B cell (primary cell): ENCODE measurements at regions of chr3 and their contacts with region 1.

Region 1: GRCh38 chr3:15405448-15406050 is 21.8 kb downstream of the METTL6 start:
- DNase-seq: peak; percentile 80
- ATAC-seq: peak; percentile 73
- H3K4me3 ChIP-seq: no peak overlapping the region
- H3K4me3 Mint-ChIP-seq: no peak overlapping the region
- H3K27ac ChIP-seq: no peak overlapping the region
- H3K27ac Mint-ChIP-seq: no peak overlapping the region
- H3K4me1 ChIP-seq: peaks cover 25 to 30% of the 10 kb centered on the region in 2 donors
- H3K4me1 Mint-ChIP-seq: peaks cover 19% of the 10 kb centered on the region
- H3K27me3 ChIP-seq: no peaks in the 10 kb centered on the region
- H3K27me3 Mint-ChIP-seq: no peaks in the 10 kb centered on the region
- CTCF ChIP-seq: peak; percentile 84

Region 2: GRCh38 chr3:15108082-15108545 is 297.4 kb before region 1 on chr3:
- CTCF ChIA-PET with region 1: interaction called, 20 read pairs
- POLR2A ChIA-PET with region 1: no interaction called
- intact Hi-C with region 1: loop called (anchors 2 kb)
- DNase-seq: peak; percentile 82
- ATAC-seq: peak; percentile 98
- H3K4me3 ChIP-seq: no peak overlapping the region
- H3K4me3 Mint-ChIP-seq: no peak overlapping the region
- H3K27ac ChIP-seq: no peak overlapping the region
- H3K27ac Mint-ChIP-seq: no peak overlapping the region
- H3K4me1 ChIP-seq: peaks cover 3 to 6% of the 10 kb centered on the region in 2 donors
- H3K4me1 Mint-ChIP-seq: peaks cover 6% of the 10 kb centered on the region
- H3K27me3 ChIP-seq: peaks cover 0 to 9% (median 0%) of the 10 kb centered on the region in 4 experiments
- H3K27me3 Mint-ChIP-seq: peaks cover 4% of the 10 kb centered on the region
- CTCF ChIP-seq: peak; percentile 90

Region 3: DNA sequence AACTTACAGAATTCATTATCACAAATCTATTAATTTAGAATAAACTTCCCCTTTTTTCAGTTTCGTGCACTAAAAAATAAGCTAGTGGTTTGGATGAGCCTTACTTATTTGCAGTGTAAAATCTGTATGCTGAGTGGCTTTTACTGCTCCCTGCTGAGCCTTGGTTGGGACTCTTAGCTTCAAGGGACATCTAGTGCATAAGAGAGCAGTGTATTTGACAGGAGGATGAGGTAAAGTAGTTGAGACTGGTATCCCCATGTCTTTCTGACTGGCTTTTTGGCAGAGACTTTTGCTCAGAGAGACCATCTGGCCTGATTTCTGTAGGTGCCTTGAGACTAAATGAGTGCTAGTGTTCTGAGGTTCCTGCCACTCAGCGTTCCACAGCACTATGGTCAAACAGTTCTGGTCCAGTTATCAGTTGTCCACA is 187.7 kb before region 1 on chr3:
- CTCF ChIA-PET with region 1: interaction called, 13 read pairs
- POLR2A ChIA-PET with region 1: no interaction called
- intact Hi-C with region 1: no loop called
- DNase-seq: no peak
- ATAC-seq: no peak
- H3K4me3 ChIP-seq: no peak overlapping the region
- H3K4me3 Mint-ChIP-seq: no peak overlapping the region
- H3K27ac ChIP-seq: no peak overlapping the region
- H3K27ac Mint-ChIP-seq: no peak overlapping the region
- H3K4me1 ChIP-seq: peaks cover 7 to 9% of the 10 kb centered on the region in 2 donors
- H3K4me1 Mint-ChIP-seq: peaks cover 25% of the 10 kb centered on the region
- H3K27me3 ChIP-seq: no peaks in the 10 kb centered on the region
- H3K27me3 Mint-ChIP-seq: no peaks in the 10 kb centered on the region
- CTCF ChIP-seq: no peak

Region 4: GRCh38 chr3:15256861-15257341 is 148.6 kb before region 1 on chr3:
- CTCF ChIA-PET with region 1: interaction called, 421 read pairs
- POLR2A ChIA-PET with region 1: no interaction called
- intact Hi-C with region 1: no loop called
- DNase-seq: no peak
- ATAC-seq: no peak
- H3K4me3 ChIP-seq: no peak overlapping the region
- H3K4me3 Mint-ChIP-seq: no peak overlapping the region
- H3K27ac ChIP-seq: peak overlapping the region in 1 of 2 donors; percentile 34
- H3K27ac Mint-ChIP-seq: peak overlapping the region; percentile 42
- H3K4me1 ChIP-seq: no peaks in the 10 kb centered on the region
- H3K4me1 Mint-ChIP-seq: peaks cover 4% of the 10 kb centered on the region
- H3K27me3 ChIP-seq: no peaks in the 10 kb centered on the region
- H3K27me3 Mint-ChIP-seq: no peaks in the 10 kb centered on the region
- CTCF ChIP-seq: no peak

Region 5: DNA sequence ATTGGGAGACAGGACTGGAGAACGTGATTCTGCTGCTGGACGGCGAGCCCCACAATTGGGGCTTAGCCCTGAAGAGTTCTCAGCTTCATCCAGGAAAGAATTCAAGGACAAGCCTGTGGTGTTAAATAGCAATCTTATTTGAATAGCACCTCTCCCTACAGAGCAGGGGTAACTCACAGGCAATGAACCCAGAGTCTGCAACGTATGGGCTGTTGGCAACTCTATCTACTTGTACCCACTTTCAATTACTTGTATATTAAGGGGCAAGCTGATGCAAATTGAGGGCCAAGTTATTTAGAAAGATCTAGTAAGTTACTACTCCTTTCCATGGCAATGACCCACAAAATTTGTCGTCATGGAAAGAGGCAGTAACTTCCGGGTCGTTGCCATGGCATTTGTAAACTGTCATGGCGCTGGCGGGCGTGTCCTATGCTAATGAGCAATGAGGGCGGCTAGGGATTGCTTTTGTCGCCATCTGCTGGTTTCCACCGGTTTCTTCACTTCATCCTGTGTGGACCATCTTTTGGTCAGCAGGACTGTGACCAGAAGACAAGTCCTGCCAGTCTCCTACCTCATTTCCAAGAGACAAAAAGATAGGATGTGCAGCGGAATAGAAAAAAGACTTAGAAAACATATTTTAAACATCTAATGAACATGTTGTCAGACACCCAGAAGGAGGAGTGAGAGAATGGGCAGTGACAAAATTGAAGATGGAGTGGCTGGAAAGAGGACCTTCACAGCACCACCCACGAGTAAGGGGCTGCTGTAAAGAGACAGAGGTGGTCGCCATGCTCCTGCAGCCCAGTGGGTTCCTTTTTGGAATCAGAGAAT is 27.4 kb before region 1 on chr3:
- CTCF ChIA-PET with region 1: interaction called, 31 read pairs
- POLR2A ChIA-PET with region 1: no interaction called
- intact Hi-C with region 1: loop called (anchors 2 kb)
- DNase-seq: peak; percentile 97
- ATAC-seq: peak; percentile 90
- H3K4me3 ChIP-seq: peak overlapping the region in 1 of 5 experiments; percentile 9
- H3K4me3 Mint-ChIP-seq: peak overlapping the region; percentile 53
- H3K27ac ChIP-seq: peak overlapping the region; percentile 88 to 91
- H3K27ac Mint-ChIP-seq: peak overlapping the region; percentile 95
- H3K4me1 ChIP-seq: peaks cover 37% of the 10 kb centered on the region in 2 donors
- H3K4me1 Mint-ChIP-seq: peaks cover 29% of the 10 kb centered on the region
- H3K27me3 ChIP-seq: no peaks in the 10 kb centered on the region
- H3K27me3 Mint-ChIP-seq: no peaks in the 10 kb centered on the region
- CTCF ChIP-seq: peak; percentile 96

Region 6: DNA sequence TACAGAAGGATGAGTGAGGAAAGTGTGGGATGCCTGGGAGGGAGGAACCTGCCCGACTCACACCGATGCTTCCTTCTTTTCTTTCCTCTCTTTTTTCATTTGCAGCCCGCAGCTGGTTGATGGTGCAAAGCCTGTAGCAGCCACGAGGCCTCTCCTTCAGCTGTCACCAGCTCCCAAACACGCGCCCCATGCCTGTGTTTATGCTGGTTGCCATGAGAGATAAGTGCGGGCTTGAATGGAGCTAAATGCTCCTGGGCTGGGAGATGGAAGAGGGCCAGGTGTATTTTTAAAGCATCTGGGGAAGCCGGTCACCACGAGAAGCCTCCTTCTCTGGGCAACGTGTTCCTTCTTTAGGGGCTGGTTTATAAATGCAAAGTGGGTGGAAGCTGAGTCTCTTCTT is 106.6 kb after region 1 on chr3:
- CTCF ChIA-PET with region 1: no interaction called
- POLR2A ChIA-PET with region 1: no interaction called
- intact Hi-C with region 1: no loop called
- DNase-seq: no peak
- ATAC-seq: no peak
- H3K4me3 ChIP-seq: no peak overlapping the region
- H3K4me3 Mint-ChIP-seq: no peak overlapping the region
- H3K27ac ChIP-seq: no peak overlapping the region
- H3K27ac Mint-ChIP-seq: no peak overlapping the region
- H3K4me1 ChIP-seq: no peaks in the 10 kb centered on the region
- H3K4me1 Mint-ChIP-seq: no peaks in the 10 kb centered on the region
- H3K27me3 ChIP-seq: no peaks in the 10 kb centered on the region
- H3K27me3 Mint-ChIP-seq: no peaks in the 10 kb centered on the region
- CTCF ChIP-seq: no peak

Region 7: DNA sequence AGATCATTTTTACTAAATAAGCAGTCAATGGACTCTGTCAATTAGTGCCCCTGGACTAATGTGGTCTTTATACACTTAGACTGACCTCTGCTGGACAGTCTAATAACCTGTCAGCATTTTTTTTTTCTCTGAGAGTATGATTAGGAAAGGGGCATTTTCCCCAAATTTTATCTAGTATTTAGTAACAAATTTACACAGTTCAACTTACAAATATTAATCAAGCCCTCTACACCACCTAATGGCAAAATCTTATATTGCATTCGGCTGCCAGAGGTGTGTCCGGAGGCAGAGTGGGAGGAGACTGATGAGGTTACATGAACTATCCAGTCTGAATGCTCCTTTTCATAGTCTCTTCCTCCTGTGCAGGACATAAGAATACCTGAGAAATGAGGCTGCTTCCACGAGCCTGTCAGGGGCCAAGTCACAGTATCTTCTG is 152.0 kb after region 1 on chr3:
- CTCF ChIA-PET with region 1: interaction called, 15 read pairs
- POLR2A ChIA-PET with region 1: interaction called, 11 read pairs
- intact Hi-C with region 1: no loop called
- DNase-seq: peak; percentile 82
- ATAC-seq: peak; percentile 73
- H3K4me3 ChIP-seq: no peak overlapping the region
- H3K4me3 Mint-ChIP-seq: no peak overlapping the region
- H3K27ac ChIP-seq: peak overlapping the region in 1 of 2 donors; percentile 78
- H3K27ac Mint-ChIP-seq: no peak overlapping the region
- H3K4me1 ChIP-seq: peaks cover 23 to 30% of the 10 kb centered on the region in 2 donors
- H3K4me1 Mint-ChIP-seq: peaks cover 29% of the 10 kb centered on the region
- H3K27me3 ChIP-seq: no peaks in the 10 kb centered on the region
- H3K27me3 Mint-ChIP-seq: no peaks in the 10 kb centered on the region
- CTCF ChIP-seq: peak; percentile 80